ENCODE measurements at regions of chr6 and their contacts with region 1.

Region 1: DNA sequence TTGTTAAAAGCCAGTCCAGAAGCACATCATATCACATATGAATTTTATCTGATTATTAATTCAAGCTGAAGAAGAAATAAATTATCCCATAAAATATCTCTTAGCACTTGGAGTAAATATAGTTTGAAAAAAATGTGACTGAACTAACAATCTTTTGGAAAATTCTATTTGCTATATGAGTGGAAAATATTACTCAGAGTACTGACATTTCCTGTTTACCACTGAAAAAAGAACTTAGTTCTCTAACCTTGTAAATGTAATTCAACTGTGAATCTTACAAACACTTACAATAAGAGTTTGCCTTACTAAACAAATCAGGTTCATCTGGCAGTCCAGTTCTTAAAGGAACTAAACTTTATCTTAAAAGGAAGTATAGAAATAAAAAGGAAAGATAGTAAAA is 44.2 kb downstream of the MOXD1 start:
- DNase-seq: no peak
- H3K4me3 ChIP-seq: no peak overlapping the region
- H3K27ac ChIP-seq: no peak overlapping the region
- H3K4me1 ChIP-seq: 0 out of 2 replicates have a peak, but pooled peaks cover 6% of the 10 kb centered on the region
- H3K27me3 ChIP-seq: no peaks in the 10 kb centered on the region
- CTCF ChIP-seq: no peak

Region 2: DNA sequence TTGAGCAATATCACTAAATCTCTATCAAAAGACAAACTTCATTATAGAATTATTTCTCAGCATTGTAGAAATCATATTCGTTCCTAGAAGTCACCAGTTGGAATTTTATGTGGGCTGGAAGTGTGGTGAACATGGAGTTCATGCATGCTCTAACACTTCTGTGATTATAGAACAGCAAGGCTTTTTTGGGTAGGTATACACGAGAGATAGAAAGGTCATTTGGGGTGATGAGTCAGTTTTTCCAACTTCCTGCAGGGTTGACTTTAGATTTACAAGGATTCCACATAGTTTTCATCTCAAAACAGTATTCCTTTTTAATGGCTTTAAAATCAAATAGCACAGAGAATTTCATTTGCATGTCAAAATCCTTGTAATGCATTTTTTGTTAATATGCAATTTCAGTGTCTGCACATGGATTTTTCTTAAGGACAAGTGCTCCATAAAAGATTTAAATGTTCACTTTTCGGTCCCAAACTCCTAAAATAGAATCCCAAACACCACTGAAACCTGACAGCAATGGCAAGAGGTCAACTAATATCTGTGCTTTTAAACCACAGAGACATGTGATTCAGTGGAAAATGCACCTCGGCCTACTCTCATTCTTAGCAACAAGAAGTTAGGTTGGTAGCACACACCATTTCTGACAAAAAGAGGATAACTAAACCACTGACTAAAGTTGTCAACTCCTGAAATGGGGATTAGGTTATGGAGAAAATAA is 166.9 kb before region 1 on chr6:
- CTCF ChIA-PET with region 1: no interaction called
- POLR2A ChIA-PET with region 1: no interaction called
- intact Hi-C with region 1: no loop called
- DNase-seq: no peak
- H3K4me3 ChIP-seq: no peak overlapping the region
- H3K27ac ChIP-seq: no peak overlapping the region
- H3K4me1 ChIP-seq: no peaks in the 10 kb centered on the region
- H3K27me3 ChIP-seq: no peaks in the 10 kb centered on the region
- CTCF ChIP-seq: no peak

Region 3: DNA sequence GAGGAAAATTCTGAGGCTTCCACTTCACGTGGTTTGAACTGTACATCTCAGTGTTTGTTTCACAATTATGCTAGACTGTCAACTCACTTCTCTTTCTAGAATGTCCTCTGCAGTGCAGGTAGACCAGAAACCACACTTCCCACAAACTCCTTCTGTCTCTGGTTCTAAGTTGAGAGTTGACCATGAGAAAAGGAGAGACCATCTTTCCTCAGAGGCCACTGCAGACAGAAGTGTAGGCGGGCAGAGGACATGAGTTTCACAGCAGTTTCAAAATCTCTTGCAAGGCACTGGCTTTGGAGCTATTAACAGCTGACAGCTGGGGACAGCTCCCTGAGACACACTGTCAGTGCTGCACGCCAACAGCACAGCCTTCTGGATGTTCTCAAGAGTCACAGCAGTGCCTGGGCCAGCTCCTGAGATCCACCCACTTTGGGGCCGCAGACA is 99.6 kb after region 1 on chr6:
- CTCF ChIA-PET with region 1: no interaction called
- POLR2A ChIA-PET with region 1: interaction called, 13 read pairs
- intact Hi-C with region 1: no loop called
- DNase-seq: no peak
- H3K4me3 ChIP-seq: no peak overlapping the region
- H3K27ac ChIP-seq: no peak overlapping the region
- H3K4me1 ChIP-seq: no peaks in the 10 kb centered on the region
- H3K27me3 ChIP-seq: no peaks in the 10 kb centered on the region
- CTCF ChIP-seq: no peak

Measured in PC-9 (cell line).